ENCODE measurements at regions of chr11 and their contacts with region 1.

Region 1: GRCh38 chr11:72814286-72815109 is at the start of gene ATG16L2:
- DNase-seq: peak; percentile 90
- H3K4me3 Mint-ChIP-seq: peak within 1 kb of the TSS; percentile 99
- H3K27ac Mint-ChIP-seq: peak within 1 kb of the TSS; percentile 98
- H3K4me1 Mint-ChIP-seq: peaks cover 54% of the 10 kb centered on the region
- H3K27me3 Mint-ChIP-seq: no peaks in the 10 kb centered on the region
- total RNA-seq, gene ATG16L2: 69.2 and 71.1 TPM in 2 replicates

Region 2: DNA sequence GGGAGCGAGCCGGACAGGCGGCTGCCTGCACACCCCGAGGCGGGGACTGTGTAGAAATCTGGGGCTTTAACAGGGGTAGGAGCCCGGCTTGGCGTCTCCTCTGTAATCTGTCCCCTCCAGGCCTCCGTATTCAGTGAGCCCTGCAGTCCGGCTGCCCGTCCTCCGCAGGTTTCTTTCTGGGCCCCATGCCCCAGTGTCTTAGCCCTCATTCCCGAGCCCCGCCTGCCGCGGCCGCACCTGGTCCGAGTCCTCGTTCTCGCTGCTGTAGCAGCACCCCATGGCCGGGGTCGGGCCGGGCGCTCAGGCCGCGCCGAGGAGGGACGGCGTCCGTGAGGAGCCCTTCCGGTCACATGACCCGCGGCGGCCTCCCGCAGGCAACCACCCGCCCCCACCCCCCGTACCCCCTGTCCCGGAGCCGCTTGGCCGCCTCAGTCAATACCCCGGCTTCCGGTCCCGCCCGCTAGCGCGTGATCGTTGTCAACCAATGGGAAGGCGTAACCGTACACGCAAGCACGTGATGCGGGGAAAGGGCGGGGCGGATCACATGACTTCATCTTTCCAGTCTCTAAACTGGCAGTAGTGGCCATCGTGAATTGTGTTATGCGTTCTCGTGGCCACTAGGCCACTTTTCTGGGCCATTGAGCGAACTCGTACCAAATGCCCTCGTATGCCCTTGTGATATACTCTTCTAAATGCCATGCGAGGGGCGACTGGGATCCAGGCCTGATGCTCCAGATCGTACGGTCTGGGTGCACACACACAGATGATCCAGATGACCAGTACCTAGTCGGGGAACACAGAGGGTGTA is 711.3 kb before region 1 on chr11 and contains the start of gene LAMTOR1:
- intact Hi-C with region 1: loop called (anchors 10 kb)
- DNase-seq: peak; percentile 97
- H3K4me3 Mint-ChIP-seq: peak within 1 kb of the TSS; percentile 95
- H3K27ac Mint-ChIP-seq: peak within 1 kb of the TSS; percentile 87
- H3K4me1 Mint-ChIP-seq: peaks cover 41% of the 10 kb centered on the region
- H3K27me3 Mint-ChIP-seq: no peaks in the 10 kb centered on the region
- total RNA-seq, gene LAMTOR1: 70.2 and 77.7 TPM in 2 replicates

Region 3: DNA sequence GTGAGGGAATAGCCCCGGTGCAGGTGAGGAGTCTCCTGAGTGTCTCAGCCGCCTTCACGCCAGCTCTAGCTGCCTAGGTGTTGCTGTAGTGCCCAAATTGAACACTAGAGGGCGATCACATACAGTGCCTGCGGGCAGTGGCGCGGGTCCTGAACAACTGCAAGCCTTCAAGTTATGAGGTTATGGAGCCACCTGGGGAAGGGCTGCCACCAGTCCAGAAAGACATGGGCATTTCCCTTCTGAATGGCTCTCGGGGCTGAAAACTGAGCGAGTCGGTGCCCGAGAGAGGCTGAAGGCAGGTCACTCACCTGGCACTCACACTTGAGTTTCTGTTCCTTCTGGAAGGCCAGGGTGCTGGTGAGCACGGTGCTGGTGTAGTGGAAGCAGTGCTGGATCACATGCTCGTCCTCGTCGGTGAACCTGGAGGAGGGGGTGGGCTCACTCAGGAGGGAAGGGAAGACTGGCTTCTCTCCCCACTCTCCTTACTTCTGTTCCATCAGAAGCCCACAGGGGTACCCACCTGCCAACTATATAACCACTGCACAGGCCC is 228.7 kb before region 1 on chr11:
- intact Hi-C with region 1: loop called (anchors 1 kb)
- DNase-seq: peak; percentile 63
- H3K4me3 Mint-ChIP-seq: peak overlapping the region; percentile 48
- H3K27ac Mint-ChIP-seq: no peak overlapping the region
- H3K4me1 Mint-ChIP-seq: peaks cover 29% of the 10 kb centered on the region
- H3K27me3 Mint-ChIP-seq: peaks cover 40% of the 10 kb centered on the region

Region 4: DNA sequence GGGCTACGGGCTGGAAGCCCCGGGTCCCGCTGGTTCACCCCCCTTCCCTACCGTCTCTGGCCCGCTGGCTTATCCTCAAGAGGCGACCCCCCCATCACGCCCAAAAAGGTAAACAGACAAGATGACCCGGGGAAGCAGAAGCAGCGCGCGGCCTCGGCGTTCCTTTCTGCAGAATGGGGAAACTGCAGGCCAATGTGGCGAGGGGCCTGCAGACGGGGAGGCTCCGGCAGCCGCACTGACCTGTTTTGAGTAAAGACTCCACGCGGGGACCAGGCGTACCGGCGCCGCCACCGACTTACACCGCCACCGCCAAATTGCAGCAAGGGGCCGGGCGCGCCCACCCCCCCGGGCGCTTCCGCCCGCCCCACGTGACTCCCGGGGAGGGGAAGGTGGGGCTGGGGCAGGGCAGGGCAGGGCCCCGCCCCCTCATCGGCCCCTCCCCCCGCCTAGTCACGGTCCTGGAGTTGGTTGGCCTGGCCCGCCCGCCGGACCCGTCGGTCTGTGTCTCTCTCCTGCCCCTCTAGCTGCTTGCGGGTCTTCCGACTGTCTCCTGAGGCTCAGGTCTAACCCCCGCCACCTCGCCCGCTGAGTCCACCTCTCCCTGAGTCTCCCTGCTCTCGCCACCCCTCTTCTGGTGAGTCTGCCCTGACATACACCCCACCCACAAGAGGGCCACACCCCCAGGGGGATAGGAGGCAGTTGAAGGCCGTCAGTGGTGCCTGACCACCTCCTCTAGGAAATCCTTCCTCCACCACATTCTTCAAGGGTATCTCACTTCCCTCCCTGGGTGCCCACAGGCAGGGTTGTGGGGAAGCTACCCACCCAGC is 62.2 kb before region 1 on chr11 and contains the start of gene ARAP1:
- intact Hi-C with region 1: loop called (anchors 1 kb)
- DNase-seq: peak; percentile 67
- H3K4me3 Mint-ChIP-seq: peak within 1 kb of the TSS; percentile 91
- H3K27ac Mint-ChIP-seq: peak within 1 kb of the TSS; percentile 91
- H3K4me1 Mint-ChIP-seq: peaks cover 42% of the 10 kb centered on the region
- H3K27me3 Mint-ChIP-seq: no peaks in the 10 kb centered on the region
- total RNA-seq, gene ARAP1: 78.8 and 88.6 TPM in 2 replicates

Region 5: DNA sequence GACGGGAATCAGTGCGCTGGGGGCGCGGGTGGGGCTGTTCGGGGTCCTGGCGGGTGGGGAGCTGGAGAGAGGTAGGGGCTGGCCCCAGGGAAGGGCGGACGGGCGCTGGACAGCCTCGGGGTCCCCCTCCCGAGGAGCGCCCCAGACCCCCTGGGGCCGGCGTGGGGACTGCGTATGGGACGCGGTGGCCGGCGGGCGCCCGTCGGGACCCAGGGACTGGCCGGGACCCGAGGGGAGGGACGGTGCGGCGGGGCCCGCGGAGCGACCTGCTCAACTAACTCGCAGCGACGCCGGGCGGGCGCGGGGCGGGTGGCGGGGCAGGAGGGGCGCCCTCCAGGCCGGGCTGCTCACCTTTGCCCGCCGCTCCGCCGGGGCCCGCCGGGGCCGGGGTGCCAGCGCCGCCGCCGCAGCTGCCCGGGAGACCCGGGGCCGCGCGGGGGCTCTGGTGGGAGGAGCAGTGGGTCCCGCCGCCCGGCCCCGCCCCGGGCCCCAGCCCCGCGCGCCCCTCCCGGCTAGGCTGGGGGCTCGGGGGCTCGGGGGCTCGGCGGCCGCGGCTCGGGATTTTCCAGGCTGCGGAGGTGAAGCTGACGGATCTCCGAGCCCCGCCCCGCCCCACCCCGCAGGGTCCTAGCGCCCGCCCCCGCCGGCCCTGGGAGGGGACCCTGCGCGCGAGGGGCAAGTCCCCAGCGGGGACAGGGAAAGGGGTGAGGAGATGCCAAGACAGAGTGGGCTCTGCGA is 33.0 kb before region 1 on chr11:
- intact Hi-C with region 1: loop called (anchors 1 kb)
- DNase-seq: peak; percentile 50
- H3K4me3 Mint-ChIP-seq: peak overlapping the region; percentile 80
- H3K27ac Mint-ChIP-seq: peak overlapping the region; percentile 64
- H3K4me1 Mint-ChIP-seq: peaks cover 25% of the 10 kb centered on the region
- H3K27me3 Mint-ChIP-seq: peaks cover 3% of the 10 kb centered on the region

Region 6: DNA sequence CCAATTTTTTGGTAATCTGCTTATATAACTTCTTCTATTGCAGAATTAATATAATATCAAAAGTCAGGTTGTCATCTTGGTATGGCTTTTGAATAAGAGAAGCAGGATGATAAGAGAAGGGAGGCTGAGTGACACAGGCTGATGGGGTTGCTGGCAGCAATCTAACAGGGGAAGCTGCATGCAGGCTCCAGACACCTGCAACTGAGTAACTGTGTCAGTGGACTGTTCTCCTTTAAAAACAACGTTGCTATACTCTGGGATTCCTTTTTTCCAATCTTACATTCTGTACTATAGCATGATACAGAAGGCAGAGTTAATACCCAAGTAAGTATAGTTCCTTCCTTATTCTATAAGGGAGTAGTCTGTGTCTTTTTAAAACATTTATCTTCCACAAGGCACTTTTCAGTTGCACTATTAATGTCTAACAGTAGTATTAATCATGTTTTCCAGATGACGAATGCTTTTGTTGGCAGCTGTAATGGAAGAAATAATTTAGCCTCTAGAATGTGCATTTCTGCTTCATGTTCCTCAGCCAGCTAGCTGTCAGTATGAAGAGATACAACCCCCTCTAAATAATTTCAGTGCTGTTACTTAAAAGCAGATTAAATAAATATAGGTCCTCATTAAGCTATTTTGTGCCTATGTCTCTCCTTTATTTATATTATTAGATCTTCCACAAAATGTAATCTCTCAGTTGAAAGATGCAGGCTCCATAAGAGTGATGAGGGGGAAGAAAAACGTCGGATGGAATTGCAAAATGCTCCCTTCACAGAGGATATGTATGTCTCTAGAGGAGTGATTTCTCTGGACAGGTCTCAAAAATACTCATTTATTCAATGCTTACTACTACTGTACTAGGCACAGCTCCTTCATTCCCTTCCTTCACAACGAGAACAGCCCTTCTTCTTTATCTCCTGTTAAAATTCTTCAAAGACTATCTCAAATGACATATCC is 50.5 kb after region 1 on chr11:
- intact Hi-C with region 1: no loop called
- DNase-seq: no peak
- H3K4me3 Mint-ChIP-seq: no peak overlapping the region
- H3K27ac Mint-ChIP-seq: no peak overlapping the region
- H3K4me1 Mint-ChIP-seq: peaks cover 12% of the 10 kb centered on the region
- H3K27me3 Mint-ChIP-seq: no peaks in the 10 kb centered on the region

Measured in activated T-helper 1 cell treated with anti-CD3 and anti-CD28 coated beads, Interleukin-12 subunit alpha, Interleukin-12 subunit beta, Interleukin-2, Interleukin-4 antibody, amounts not matched to agents 30 ng/mL and 10 ng/mL and 1 ng/mL, durations not matched to agents 14 hours and 24 hours and 36 hours (primary cell).